ENCODE measurements at regions of chr11 and their contacts with region 1.

Region 1: GRCh38 chr11:12281571-12282478 is 95.5 kb upstream of the PARVA start:
- DNase-seq: peak; percentile 87 to 92
- H3K4me3 ChIP-seq: no peak overlapping the region
- H3K27ac ChIP-seq: peak overlapping the region in 1 of 2 donors; percentile 23
- H3K4me1 ChIP-seq: peaks cover 0 to 53% (median 25%) of the 10 kb centered on the region in 4 donors
- H3K27me3 ChIP-seq: no peaks in the 10 kb centered on the region
- CTCF ChIP-seq: peak; percentile 88 to 99

Region 2: DNA sequence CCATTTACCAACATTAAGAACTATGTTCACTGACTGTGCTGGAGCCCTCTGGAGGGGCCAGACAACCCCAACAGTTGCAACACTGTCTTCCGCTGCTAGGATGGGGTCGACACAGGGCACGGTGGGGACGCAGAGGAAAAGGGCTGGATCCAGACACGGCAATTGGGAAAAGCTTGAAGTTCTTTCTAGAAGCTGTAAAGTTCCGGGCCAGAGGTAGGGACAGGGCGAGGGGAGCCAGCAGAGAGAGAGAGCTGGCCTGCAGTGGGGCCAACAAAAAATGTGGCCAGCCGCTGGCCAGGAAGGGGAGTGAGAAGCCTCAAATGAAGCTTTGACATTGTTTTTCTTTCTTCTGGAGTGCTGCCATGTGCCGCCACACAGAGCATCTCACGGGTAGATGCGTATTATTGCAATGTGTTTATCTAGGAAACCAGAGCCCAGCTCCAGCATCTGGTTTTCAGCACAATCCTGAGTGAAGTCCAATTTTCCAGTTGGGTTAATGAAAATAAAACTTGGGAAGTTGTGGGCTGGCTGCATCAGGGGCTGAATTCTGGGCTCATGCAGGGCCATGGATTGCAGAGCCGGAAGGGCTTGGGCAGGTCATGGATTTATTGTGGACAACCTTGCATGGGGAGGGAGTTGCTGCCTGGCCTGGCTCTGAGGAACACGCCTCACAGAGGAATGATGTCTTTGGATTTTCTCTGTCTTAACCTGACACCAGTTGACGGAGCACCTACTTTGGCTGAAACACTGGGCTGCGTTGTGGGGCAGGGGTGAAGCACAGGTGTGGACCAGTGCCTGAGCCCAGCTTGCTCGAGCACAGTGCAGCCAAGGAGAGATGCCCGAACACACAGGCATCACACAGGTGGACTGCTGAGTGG is 1894.4 kb before region 1 on chr11:
- intact Hi-C with region 1: no loop called
- DNase-seq: peak; percentile 77 to 86
- H3K4me3 ChIP-seq: no peak overlapping the region
- H3K27ac ChIP-seq: peak overlapping the region in 1 of 2 donors; percentile 30
- H3K4me1 ChIP-seq: peaks cover 0 to 39% (median 8%) of the 10 kb centered on the region in 4 donors
- H3K27me3 ChIP-seq: no peaks in the 10 kb centered on the region
- CTCF ChIP-seq: no peak

Region 3: GRCh38 chr11:12087075-12088004 is 194.5 kb before region 1 on chr11:
- intact Hi-C with region 1: loop called (anchors 2 kb)
- DNase-seq: peak; percentile 65 to 85
- H3K4me3 ChIP-seq: peak overlapping the region; percentile 42 to 50
- H3K27ac ChIP-seq: peak overlapping the region; percentile 84 to 91
- H3K4me1 ChIP-seq: peaks cover 0 to 78% (median 56%) of the 10 kb centered on the region in 4 donors
- H3K27me3 ChIP-seq: no peaks in the 10 kb centered on the region
- CTCF ChIP-seq: peak; percentile 36 to 58

Measured in tibial artery (tissue), 4 donors.